Activated CD4-positive, alpha-beta T cell treated with anti-CD3 and anti-CD28 coated beads, Interleukin-2, amount 10 ng/mL, durations not matched to agents 24 days and 14 days (primary cell): ENCODE measurements at regions of chr6 and their contacts with region 1.

Region 1: DNA sequence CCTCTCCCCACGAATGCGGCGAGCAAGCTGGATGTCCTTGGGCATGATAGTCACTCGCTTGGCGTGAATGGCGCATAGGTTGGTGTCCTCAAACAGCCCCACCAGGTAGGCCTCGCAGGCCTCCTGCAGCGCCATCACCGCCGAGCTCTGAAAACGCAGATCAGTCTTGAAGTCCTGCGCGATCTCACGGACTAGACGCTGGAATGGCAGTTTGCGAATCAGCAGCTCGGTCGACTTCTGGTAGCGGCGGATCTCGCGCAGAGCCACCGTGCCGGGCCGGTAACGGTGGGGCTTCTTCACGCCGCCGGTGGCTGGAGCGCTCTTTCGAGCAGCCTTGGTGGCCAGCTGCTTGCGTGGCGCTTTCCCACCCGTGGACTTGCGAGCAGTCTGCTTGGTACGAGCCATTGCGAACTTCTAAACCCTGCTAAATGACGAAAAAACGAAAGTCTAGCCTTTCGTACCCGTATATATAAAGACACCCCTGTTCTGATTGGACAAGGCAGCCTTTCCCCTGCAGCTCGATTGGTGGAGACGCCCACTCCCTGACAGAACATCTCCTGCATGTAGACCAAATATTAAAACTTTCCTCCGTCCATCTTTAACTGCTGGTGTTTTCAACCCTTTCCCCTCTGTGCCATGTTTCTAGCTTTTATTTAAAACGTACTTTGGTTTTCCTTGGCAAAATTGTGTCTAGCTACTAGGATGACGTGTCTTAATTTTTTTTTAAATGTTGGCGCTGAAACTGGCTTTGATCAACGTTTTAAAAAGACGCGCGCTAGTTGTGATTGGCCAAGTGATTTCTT is 109.8 kb downstream of the HFE start:
- DNase-seq: peak; percentile 96
- H3K4me3 Mint-ChIP-seq: peak overlapping the region; percentile 87
- H3K27ac Mint-ChIP-seq: peak overlapping the region; percentile 93
- H3K4me1 Mint-ChIP-seq: peaks cover 57% of the 10 kb centered on the region
- H3K27me3 Mint-ChIP-seq: no peaks in the 10 kb centered on the region

Region 2: DNA sequence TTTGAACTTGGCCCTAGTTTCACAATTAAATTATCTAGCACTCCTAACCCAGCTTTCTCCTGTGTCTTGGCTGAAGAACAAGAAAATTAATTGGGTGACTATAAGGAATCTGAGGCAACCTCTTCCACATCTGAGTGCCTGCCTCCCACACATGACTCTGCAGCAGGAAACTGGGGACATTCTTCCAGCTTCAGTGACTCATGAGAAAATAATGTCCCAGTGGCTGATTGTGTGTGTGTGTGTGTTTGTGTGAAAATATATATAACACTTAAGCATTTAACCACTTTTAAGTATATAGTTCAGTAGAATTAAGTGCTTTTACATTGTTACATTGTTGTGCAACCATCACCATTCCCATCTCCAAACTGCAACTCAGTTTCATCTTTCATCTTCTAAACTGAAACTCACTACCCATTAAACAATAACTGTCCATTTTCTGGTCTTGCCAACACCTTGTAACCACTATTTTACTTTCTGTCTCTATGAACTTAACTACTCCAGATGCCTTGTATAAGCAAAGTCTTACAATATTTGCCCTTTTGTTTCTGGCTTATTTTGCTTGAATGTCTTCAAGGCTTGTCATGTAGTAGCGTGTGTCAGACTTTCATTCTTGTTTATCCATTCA is 225.7 kb before region 1 on chr6:
- intact Hi-C with region 1: no loop called
- DNase-seq: no peak
- H3K4me3 Mint-ChIP-seq: peak overlapping the region; percentile 6
- H3K27ac Mint-ChIP-seq: peak overlapping the region; percentile 30
- H3K4me1 Mint-ChIP-seq: peaks cover 52% of the 10 kb centered on the region
- H3K27me3 Mint-ChIP-seq: no peaks in the 10 kb centered on the region

Region 3: DNA sequence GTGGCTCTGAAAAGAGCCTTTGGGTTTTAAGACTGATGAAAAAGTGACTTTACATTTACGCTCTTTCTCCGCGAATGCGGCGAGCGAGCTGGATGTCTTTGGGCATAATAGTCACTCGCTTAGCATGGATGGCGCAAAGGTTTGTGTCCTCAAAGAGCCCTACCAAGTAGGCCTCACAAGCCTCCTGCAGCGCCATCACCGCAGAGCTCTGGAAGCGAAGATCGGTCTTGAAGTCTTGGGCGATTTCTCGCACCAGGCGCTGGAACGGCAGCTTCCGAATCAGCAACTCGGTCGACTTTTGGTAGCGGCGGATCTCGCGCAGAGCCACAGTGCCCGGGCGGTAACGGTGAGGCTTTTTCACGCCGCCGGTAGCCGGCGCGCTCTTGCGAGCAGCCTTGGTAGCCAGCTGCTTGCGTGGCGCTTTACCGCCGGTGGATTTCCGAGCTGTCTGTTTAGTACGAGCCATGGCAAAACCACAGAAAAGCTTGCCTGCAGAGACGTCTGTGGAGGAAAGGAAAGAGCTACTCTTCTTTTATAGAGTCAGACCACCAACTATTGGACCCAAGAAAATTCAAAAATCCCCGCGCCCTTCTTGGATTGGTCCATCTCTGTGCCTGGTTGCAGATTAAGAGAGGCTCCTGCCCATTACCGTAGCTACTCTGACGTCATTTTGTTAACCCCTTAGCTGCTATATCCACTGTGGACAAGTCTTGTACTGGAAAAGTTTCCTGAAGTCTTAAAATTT is 165.3 kb before region 1 on chr6:
- intact Hi-C with region 1: loop called (anchors 5 kb)
- DNase-seq: peak; percentile 97
- H3K4me3 Mint-ChIP-seq: peak overlapping the region; percentile 92
- H3K27ac Mint-ChIP-seq: peak overlapping the region; percentile 97
- H3K4me1 Mint-ChIP-seq: peaks cover 66% of the 10 kb centered on the region
- H3K27me3 Mint-ChIP-seq: peaks cover 3% of the 10 kb centered on the region

Region 4: DNA sequence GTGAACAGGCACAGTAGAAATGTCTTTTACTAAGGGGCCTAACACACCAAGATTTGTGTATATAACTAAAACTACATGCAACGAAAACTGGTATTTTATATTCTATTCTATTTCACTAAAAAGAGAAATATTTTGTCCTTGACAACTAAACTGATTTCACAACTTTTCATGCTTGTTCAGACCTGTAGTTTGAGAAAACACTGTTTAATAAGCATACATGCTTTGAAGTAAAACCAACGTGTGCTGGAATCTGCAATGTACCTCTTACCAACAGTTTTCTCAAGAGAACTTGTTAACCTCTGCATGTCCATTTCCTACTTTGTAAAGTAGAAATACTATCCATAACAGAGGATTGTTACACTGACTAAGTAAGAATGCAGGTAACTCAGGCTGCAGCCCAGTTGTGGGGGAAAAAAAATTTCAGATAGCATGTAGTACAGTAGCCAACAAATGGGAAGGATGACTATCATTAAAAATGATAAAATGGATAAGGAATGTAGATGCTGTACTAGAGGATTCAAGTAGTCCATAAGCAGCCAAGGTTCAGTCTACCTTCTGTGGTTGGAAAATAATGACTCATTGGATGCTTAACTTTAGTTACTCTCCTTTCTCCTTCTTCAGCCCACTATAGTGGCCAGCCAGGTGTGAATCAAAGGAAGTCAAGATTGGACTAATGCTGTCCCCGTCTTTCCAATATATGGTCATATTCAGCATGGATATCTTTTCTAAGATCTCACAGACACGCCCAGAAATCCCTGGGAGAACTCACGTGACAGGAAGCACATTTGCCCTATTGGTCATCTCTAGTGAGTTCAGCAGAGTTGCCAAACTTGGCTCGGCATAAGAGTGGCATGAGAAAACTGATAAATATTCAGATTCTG is 44.6 kb before region 1 on chr6:
- intact Hi-C with region 1: no loop called
- DNase-seq: peak; percentile 54
- H3K4me3 Mint-ChIP-seq: no peak overlapping the region
- H3K27ac Mint-ChIP-seq: no peak overlapping the region
- H3K4me1 Mint-ChIP-seq: peaks cover 27% of the 10 kb centered on the region
- H3K27me3 Mint-ChIP-seq: peaks cover 4% of the 10 kb centered on the region

Region 5: DNA sequence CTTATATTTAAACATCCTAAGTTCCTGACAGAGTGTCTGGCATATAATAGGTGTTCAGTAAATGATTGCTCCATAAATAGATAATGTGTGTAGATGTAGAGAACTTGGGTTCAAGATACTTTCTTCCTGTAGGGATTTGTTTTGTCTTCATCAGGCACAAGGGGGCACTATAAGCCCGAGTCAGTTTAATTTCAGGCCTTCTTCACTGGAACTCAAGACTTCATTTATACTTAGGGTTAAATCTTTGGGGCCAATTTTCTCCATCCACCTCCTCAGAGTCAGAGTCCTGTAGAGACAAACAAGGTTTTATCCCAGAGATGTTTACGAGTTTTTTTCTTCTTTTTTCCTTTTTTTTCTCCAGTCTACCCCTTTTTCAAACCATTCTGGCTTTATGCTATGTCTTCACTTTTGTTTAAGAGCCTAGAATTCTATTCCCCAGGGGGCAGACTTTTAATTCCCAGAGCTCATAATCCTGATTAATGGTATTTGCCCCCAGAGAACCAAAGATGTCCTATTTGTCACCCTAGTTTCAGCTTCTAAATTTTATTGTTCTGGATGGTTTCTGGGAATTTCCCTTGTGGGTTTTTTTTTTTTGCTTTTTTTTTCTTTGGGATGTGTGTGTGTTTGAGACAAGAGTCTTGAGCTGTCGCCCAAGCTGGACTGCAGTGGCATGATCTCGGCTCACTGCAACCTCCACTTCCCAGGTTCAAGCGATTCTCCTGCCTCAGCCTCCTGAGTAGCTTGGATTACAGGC is 21.4 kb before region 1 on chr6:
- intact Hi-C with region 1: loop called (anchors 1 kb)
- DNase-seq: peak; percentile 91
- H3K4me3 Mint-ChIP-seq: peak overlapping the region; percentile 40
- H3K27ac Mint-ChIP-seq: peak overlapping the region; percentile 63
- H3K4me1 Mint-ChIP-seq: peaks cover 45% of the 10 kb centered on the region
- H3K27me3 Mint-ChIP-seq: no peaks in the 10 kb centered on the region

Region 6: GRCh38 chr6:26216356-26216885 is 19.4 kb after region 1 on chr6:
- intact Hi-C with region 1: loop called (anchors 1 kb)
- DNase-seq: peak; percentile 96
- H3K4me3 Mint-ChIP-seq: no peak overlapping the region
- H3K27ac Mint-ChIP-seq: no peak overlapping the region
- H3K4me1 Mint-ChIP-seq: peaks cover 27% of the 10 kb centered on the region
- H3K27me3 Mint-ChIP-seq: no peaks in the 10 kb centered on the region

Region 7: GRCh38 chr6:27809939-27810767 is 1613.1 kb after region 1 on chr6:
- intact Hi-C with region 1: loop called (anchors 5 kb)
- DNase-seq: peak; percentile 96
- H3K4me3 Mint-ChIP-seq: peak overlapping the region; percentile 87
- H3K27ac Mint-ChIP-seq: peak overlapping the region; percentile 96
- H3K4me1 Mint-ChIP-seq: peaks cover 67% of the 10 kb centered on the region
- H3K27me3 Mint-ChIP-seq: no peaks in the 10 kb centered on the region